MCF 10A (cell line): ENCODE measurements at regions of chr6 and their contacts with region 1.

Region 1: DNA sequence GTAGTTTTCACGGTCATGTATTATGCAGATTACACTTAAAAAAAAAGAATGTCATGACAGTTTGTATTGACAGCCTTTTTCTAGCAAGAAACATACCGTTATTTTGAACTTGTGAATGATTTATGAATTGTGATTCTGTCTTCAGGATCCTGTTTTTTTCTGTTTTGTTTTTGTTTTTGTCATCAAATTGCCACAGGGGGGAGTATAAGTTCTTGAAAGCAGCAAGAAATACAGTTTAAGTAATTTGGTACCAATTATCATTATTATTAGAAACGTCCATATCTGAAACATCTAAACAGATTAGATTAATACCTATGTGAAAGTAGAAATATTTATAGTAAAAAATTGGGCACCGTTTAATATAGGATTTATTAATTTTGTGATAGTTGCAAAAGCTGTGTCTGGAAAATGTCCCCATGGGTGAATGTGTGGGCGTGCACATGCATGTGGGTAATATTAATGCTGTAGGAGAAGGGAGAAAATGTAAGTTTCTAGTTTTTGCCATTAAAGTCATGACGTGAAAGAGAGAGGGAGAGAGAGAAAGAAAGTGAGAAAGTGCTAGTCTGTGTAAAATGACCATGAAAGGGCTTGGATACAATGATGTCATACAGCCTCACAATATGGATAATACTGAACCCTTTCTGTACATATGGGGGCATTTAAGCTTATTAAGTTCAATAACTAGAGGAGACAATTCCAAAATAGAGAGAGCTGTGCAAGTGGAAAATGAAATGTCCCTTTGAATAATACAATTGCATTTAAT is 9.4 kb upstream of the CCN2 start:
- DNase-seq: no peak
- H3K4me3 Mint-ChIP-seq: no peak overlapping the region
- H3K27ac Mint-ChIP-seq: no peak overlapping the region
- H3K4me1 Mint-ChIP-seq: peaks cover under 1% of the 10 kb centered on the region
- H3K27me3 Mint-ChIP-seq: no peaks in the 10 kb centered on the region
- CTCF ChIP-seq: peak; percentile 41

Region 2: GRCh38 chr6:131492932-131493573 is 467.5 kb before region 1 on chr6:
- CTCF ChIA-PET with region 1: no interaction called
- POLR2A ChIA-PET with region 1: no interaction called
- intact Hi-C with region 1: no loop called
- DNase-seq: no peak
- H3K4me3 Mint-ChIP-seq: no peak overlapping the region
- H3K27ac Mint-ChIP-seq: no peak overlapping the region
- H3K4me1 Mint-ChIP-seq: no peaks in the 10 kb centered on the region
- H3K27me3 Mint-ChIP-seq: no peaks in the 10 kb centered on the region
- CTCF ChIP-seq: no peak

Region 3: DNA sequence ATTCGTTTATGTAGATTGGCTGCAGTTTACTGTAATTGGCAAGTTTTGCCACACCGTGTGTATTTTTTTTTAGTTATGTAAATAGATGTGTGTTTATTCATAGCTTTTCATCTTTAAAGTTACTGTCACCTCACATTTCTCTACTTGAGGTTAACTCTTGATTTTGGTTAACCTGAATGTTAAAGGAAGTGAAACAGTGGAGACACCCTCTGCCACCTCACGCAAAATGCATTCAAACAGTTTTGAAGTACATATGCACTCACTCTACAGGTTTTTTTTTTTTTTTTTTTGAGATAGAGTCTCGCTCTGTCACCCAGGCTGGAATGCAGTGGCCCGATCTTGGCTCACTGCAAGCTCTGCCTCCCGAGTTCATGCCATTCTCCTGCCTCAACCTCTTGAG is 277.1 kb before region 1 on chr6:
- CTCF ChIA-PET with region 1: no interaction called
- POLR2A ChIA-PET with region 1: no interaction called
- intact Hi-C with region 1: no loop called
- DNase-seq: no peak
- H3K4me3 Mint-ChIP-seq: no peak overlapping the region
- H3K27ac Mint-ChIP-seq: no peak overlapping the region
- H3K4me1 Mint-ChIP-seq: no peaks in the 10 kb centered on the region
- H3K27me3 Mint-ChIP-seq: no peaks in the 10 kb centered on the region
- CTCF ChIP-seq: no peak

Region 4: DNA sequence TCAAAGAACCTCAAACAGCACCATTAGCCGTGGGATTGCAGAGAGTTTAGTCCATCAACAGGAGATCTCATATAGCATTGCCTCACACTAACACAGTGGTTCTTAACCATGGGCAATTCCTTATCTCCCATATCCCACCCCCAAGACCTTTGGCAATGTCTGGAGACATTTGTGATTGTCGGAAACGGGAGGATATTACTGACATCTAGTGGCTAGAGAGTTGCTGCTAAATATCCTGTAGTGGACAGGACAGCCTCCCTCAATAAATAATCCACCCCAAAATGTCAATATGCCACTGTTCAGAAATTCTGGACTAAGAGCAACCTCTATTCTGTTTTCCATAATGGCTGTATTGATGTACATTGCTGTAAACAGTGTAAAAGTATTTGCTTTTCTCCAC is 200.7 kb after region 1 on chr6:
- CTCF ChIA-PET with region 1: interaction called, 6 read pairs
- POLR2A ChIA-PET with region 1: no interaction called
- intact Hi-C with region 1: loop called (anchors 1 kb)
- DNase-seq: peak; percentile 51
- H3K4me3 Mint-ChIP-seq: no peak overlapping the region
- H3K27ac Mint-ChIP-seq: no peak overlapping the region
- H3K4me1 Mint-ChIP-seq: no peaks in the 10 kb centered on the region
- H3K27me3 Mint-ChIP-seq: no peaks in the 10 kb centered on the region
- CTCF ChIP-seq: peak; percentile 57

Region 5: GRCh38 chr6:132530293-132530974 is 569.9 kb after region 1 on chr6:
- CTCF ChIA-PET with region 1: no interaction called
- POLR2A ChIA-PET with region 1: no interaction called
- intact Hi-C with region 1: no loop called
- DNase-seq: peak; percentile 78
- H3K4me3 Mint-ChIP-seq: no peak overlapping the region
- H3K27ac Mint-ChIP-seq: no peak overlapping the region
- H3K4me1 Mint-ChIP-seq: no peaks in the 10 kb centered on the region
- H3K27me3 Mint-ChIP-seq: no peaks in the 10 kb centered on the region
- CTCF ChIP-seq: peak; percentile 62